Dorsolateral prefrontal cortex (tissue), 120 donors: ENCODE measurements at regions of chr5 and their contacts with region 1.

Region 1: GRCh38 chr5:93607367-93608258 is 24.6 kb downstream of the NR2F1 start:
- DNase-seq: peak in 2 of 10 donors; percentile 42 to 74
- H3K4me3 ChIP-seq: peak overlapping the region in 51 of 59 donors; percentile 2 to 52 (median 31)
- H3K27ac ChIP-seq: peak overlapping the region in 20 of 59 donors; percentile 6 to 74 (median 35)
- H3K27me3 ChIP-seq: peaks cover 0 to 92% (median 30%) of the 10 kb centered on the region in 45 donors
- CTCF ChIP-seq: peak in 55 of 56 donors; percentile 13 to 77 (median 60)

Region 2: GRCh38 chr5:93800988-93801811 is 193.6 kb after region 1 on chr5:
- intact Hi-C with region 1: loop called (anchors 2 to 5 kb)
- DNase-seq: peak in 1 of 10 donors; percentile 15
- H3K4me3 ChIP-seq: peak overlapping the region in 14 of 59 donors; percentile 1 to 38 (median 22)
- H3K27ac ChIP-seq: peak overlapping the region in 5 of 59 donors; percentile 2 to 33 (median 23)
- H3K27me3 ChIP-seq: no peaks in the 10 kb centered on the region
- CTCF ChIP-seq: peak; percentile 54 to 96 (median 82)

Region 3: DNA sequence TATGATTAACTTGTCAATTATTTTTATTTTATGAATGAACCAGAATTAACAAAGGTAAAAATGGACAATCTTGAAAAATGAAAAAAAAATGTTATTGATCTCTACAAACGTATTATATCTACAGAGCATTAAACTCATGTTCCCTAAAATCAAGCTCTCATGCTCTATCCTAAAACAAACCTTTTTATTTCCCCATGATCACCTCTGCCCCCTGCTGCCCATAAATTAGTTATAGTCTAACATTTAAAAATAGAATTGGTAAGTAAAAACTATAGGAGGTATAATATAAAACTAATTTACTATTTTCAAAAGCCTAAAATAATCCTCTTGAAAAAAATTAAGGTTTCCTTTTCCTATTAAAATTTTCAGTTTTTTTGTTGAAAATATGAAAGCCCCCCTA is 301.7 kb after region 1 on chr5:
- intact Hi-C with region 1: loop called in 1 of 2 experiments (anchors 10 kb)
- DNase-seq: no peak
- H3K4me3 ChIP-seq: no peak overlapping the region
- H3K27ac ChIP-seq: no peak overlapping the region
- H3K27me3 ChIP-seq: no peaks in the 10 kb centered on the region
- CTCF ChIP-seq: peak in 6 of 56 donors; percentile 6 to 16 (median 12)